ENCODE measurements at regions of chr10 and their contacts with region 1.

Region 1: GRCh38 chr10:61903221-61903927 is 1.9 kb downstream of the ARID5B start:
- DNase-seq: peak; percentile 82
- H3K4me3 Mint-ChIP-seq: peak overlapping the region; percentile 94
- H3K27ac Mint-ChIP-seq: peak overlapping the region; percentile 98
- H3K4me1 Mint-ChIP-seq: peaks cover 37% of the 10 kb centered on the region
- H3K27me3 Mint-ChIP-seq: no peaks in the 10 kb centered on the region

Region 2: DNA sequence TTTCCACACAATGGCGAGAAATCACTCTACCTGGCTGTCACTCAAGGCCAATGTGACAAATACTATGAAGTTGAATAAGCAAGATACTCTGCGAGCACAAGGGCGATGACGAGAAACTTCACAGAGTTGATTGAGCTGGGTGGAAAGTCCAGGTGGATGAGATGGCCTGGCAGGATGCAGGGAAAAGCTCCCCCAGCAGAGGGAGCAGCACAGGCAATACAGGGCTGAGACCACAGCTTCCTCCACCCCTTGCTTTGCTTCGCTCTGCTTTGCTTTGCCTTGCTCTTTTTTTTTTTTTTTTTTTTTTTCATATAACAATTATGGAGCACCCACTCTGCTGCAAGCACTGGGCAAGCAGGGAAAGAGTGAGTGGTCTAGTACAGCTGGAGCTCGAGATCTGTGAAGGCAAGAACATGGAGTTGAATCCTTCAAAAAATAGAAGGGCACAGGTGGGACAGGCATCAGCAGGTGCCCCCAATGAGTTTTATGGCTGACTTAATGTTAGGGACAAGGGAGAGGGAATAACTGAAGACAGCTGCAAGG is 152.4 kb before region 1 on chr10:
- CTCF ChIA-PET with region 1: interaction called, 11 read pairs
- POLR2A ChIA-PET with region 1: interaction called, 57 read pairs
- DNase-seq: peak; percentile 76
- H3K4me3 Mint-ChIP-seq: no peak overlapping the region
- H3K27ac Mint-ChIP-seq: peak overlapping the region; percentile 80
- H3K4me1 Mint-ChIP-seq: peaks cover 31% of the 10 kb centered on the region
- H3K27me3 Mint-ChIP-seq: no peaks in the 10 kb centered on the region

Region 3: GRCh38 chr10:61943674-61944410 is 40.5 kb after region 1 on chr10:
- CTCF ChIA-PET with region 1: interaction called, 17 read pairs
- POLR2A ChIA-PET with region 1: interaction called, 382 read pairs
- DNase-seq: no peak
- H3K4me3 Mint-ChIP-seq: peak overlapping the region; percentile 68
- H3K27ac Mint-ChIP-seq: peak overlapping the region; percentile 87
- H3K4me1 Mint-ChIP-seq: peaks cover 56% of the 10 kb centered on the region
- H3K27me3 Mint-ChIP-seq: no peaks in the 10 kb centered on the region

Region 4: DNA sequence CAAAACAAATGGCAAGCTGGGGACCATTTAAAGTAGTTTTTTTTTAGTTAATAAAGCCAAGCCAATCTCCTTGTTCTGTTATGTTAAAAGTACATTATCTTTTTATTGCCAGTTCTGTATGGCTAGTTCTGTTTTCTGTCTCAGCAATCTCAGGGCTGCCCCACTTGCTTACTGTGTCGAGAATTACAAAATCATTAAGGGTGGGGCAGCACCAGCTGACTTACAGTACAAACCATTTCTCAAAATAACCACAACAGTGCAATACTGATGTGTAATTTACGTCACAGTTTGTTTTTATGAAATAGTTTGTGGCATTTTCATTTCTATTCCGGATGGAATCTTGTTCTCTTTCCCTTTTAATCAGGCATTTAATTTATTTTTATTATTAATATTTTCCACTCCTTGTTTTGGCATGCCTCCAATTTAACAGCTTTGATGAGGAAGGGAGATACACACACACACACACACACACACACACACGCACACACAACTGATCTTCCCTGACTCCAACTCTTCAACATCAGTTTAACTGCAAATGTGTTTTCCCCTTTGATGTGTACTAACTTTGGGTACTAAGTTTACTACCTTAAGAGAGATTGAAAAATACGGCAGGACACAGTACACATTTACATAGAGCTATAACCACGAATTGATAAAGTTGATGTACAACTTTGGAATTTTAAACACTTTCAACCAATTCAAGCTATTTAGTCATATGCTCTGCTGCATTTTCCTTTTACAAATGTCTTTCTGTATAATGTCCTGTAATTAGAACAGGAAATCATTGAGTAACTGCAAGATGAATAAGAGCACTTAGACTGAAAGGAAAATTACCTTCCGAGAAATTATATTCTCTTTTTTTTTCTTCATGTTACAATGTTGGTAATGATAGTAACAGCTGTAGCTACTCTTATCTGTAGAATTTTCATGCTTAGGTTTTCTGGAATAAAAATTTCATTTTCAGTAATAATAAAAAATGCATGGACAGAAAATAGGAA is 89.6 kb after region 1 on chr10:
- CTCF ChIA-PET with region 1: interaction called, 32 read pairs
- POLR2A ChIA-PET with region 1: interaction called, 355 read pairs
- DNase-seq: peak; percentile 75
- H3K4me3 Mint-ChIP-seq: peak overlapping the region; percentile 69
- H3K27ac Mint-ChIP-seq: peak overlapping the region; percentile 91
- H3K4me1 Mint-ChIP-seq: peaks cover 76% of the 10 kb centered on the region
- H3K27me3 Mint-ChIP-seq: no peaks in the 10 kb centered on the region

Region 5: DNA sequence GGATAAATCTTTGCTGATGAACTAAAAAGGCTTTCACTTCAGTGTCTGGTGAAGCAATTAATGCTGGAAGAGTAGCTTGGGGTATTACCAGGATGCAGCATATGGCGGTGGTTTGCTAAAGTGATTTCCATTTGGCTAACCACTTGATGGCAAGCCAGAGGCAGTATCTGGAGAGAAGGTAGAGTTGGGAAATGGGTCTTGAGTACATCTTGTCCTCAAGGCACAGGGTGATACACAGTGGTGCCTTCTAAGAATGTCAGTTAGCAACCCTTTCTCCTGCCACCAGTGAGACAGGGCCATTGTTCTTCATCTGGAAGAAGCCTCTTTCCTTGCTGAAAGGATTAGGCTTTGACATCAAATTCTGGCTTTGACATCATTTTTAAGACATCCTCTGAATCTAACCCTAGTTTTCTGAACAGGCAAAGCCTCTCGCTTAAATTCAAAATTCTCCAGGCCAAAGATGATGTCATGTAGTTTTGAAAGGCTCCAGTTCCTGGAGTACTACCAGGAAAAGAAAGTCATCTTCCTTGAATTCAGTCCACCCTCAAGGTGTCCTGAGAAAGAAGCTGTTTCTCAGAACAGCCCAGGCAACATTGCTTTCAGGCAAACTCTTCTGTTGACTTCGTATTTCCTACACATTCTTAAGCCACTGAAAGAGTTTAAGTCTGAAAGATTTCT is 160.6 kb after region 1 on chr10:
- CTCF ChIA-PET with region 1: interaction called, 4 read pairs
- POLR2A ChIA-PET with region 1: interaction called, 785 read pairs
- DNase-seq: no peak
- H3K4me3 Mint-ChIP-seq: peak overlapping the region; percentile 36
- H3K27ac Mint-ChIP-seq: peak overlapping the region; percentile 89
- H3K4me1 Mint-ChIP-seq: peaks cover 88% of the 10 kb centered on the region
- H3K27me3 Mint-ChIP-seq: no peaks in the 10 kb centered on the region

Region 6: GRCh38 chr10:62244780-62245467 is 341.6 kb after region 1 on chr10:
- CTCF ChIA-PET with region 1: interaction called, 81 read pairs
- POLR2A ChIA-PET with region 1: interaction called, 92 read pairs
- DNase-seq: peak; percentile 59
- H3K4me3 Mint-ChIP-seq: peak overlapping the region; percentile 52
- H3K27ac Mint-ChIP-seq: peak overlapping the region; percentile 65
- H3K4me1 Mint-ChIP-seq: peaks cover 38% of the 10 kb centered on the region
- H3K27me3 Mint-ChIP-seq: no peaks in the 10 kb centered on the region

Measured in activated CD4-positive, alpha-beta memory T cell treated with anti-CD3 and anti-CD28 coated beads, Interleukin-2, amount 10 ng/mL, durations not matched to agents 7 days and 5 days (primary cell).